Endothelial cell of umbilical vein (primary cell): ENCODE measurements at regions of chr2 and their contacts with region 1.

Region 1: DNA sequence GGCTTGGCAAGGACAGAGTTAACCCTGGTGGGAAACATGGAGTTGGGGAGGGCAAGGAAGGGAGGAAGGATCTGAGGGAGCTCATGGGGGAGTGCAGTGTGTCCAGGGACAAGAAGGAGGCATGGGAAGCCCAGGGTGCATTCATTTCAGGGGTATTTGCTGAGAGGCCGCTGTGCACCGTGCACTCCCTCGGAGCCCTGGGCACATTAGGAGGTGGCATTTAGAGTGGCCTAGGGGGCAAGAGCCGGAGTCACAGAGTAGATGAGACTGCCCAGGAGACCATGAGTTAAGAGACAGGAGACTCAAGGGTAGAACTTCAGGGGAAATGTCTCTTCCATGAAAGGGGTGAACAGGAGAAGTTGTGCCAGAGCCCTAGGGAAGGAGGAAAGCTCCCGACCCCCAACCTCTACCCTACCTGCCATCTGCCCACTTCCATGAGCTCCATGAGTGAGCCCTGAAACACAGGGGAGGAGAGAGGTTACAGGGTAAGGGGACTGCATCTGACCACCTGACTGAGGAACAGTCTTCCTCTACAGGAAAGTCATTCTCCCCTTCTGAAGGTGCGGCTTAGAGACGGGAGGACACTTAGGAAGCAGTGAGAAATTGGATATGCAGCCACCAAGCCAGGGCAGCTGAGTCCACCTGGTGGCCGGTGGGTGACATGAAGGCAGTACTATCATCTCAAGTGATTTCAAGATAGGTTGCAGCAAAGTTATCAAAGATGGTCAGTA is 58.5 kb upstream of the COPS8 start:
- DNase-seq: peak; percentile 86
- H3K4me3 ChIP-seq: no peak overlapping the region
- H3K27ac ChIP-seq: no peak overlapping the region
- H3K4me1 ChIP-seq: peaks cover 5% of the 10 kb centered on the region
- H3K27me3 ChIP-seq: no peaks in the 10 kb centered on the region
- CTCF ChIP-seq: peak; percentile 83 to 85
- POLR2A ChIP-seq: no peak

Region 2: DNA sequence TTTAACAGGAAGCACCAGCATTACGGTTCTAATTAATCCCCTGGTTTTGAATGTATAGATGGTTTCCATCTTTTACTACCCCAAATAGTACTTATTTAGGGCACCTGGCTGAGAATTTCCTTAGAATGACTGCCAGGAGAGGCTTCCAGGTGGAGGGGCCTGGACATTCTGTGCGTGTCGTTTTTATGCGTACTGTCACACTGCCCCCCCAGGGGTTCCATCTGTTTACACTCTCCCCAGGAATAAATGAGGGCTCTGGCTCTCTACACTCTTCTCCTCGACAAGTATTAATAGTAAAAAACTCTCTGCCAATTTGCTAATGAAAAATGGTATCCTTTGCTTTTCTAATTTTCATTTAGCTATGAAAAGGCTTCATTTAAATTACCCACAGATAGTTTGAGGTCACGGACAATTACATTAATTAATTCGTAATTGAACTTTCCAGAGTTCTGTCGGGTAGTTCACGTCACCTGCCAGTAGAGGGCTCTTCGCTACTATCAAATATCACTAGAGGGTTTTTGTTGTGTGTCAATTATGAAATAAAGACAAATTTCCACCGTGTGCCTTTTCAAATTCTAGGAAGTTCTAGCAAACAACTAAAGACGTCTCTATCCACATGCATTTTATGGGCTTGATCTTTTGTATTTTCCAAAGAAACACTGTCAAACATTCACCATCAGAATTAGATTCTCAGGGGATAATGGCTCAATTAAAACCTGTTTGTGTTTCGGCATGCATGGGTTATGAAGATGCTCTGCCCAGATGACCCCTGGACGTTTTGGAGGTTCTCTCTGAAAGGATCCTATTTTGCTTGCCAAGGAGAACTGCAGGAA is 674.2 kb before region 1 on chr2:
- CTCF ChIA-PET with region 1: interaction called, 3 read pairs
- POLR2A ChIA-PET with region 1: no interaction called
- dilution Hi-C with region 1: no loop called
- intact Hi-C with region 1: loop called (anchors 1 kb)
- DNase-seq: peak; percentile 44
- H3K4me3 ChIP-seq: no peak overlapping the region
- H3K27ac ChIP-seq: no peak overlapping the region
- H3K4me1 ChIP-seq: no peaks in the 10 kb centered on the region
- H3K27me3 ChIP-seq: no peaks in the 10 kb centered on the region
- CTCF ChIP-seq: peak; percentile 60 to 61
- POLR2A ChIP-seq: no peak

Region 3: GRCh38 chr2:236569573-236569973 is 457.6 kb before region 1 on chr2 and contains the start of gene ACKR3:
- CTCF ChIA-PET with region 1: interaction called, 17 read pairs
- POLR2A ChIA-PET with region 1: interaction called, 5 read pairs
- dilution Hi-C with region 1: no loop called
- intact Hi-C with region 1: loop called (anchors 1 kb)
- DNase-seq: peak; percentile 95
- H3K4me3 ChIP-seq: peak within 1 kb of the TSS; percentile 18 to 70 (median 58)
- H3K27ac ChIP-seq: peak within 1 kb of the TSS; percentile 46
- H3K4me1 ChIP-seq: peaks cover 52% of the 10 kb centered on the region
- H3K27me3 ChIP-seq: no peaks in the 10 kb centered on the region
- CTCF ChIP-seq: peak; percentile 55 to 69
- POLR2A ChIP-seq: peak; percentile 87
- total RNA-seq, gene ACKR3: 24.0 and 31.1 TPM in 2 replicates

Region 4: GRCh38 chr2:236745420-236746197 is 281.5 kb before region 1 on chr2:
- CTCF ChIA-PET with region 1: interaction called, 5 read pairs
- POLR2A ChIA-PET with region 1: no interaction called
- dilution Hi-C with region 1: no loop called
- intact Hi-C with region 1: loop called (anchors 2 kb)
- DNase-seq: no peak
- H3K4me3 ChIP-seq: no peak overlapping the region
- H3K27ac ChIP-seq: no peak overlapping the region
- H3K4me1 ChIP-seq: peaks cover 15% of the 10 kb centered on the region
- H3K27me3 ChIP-seq: no peaks in the 10 kb centered on the region
- CTCF ChIP-seq: no peak
- POLR2A ChIP-seq: no peak

Region 5: DNA sequence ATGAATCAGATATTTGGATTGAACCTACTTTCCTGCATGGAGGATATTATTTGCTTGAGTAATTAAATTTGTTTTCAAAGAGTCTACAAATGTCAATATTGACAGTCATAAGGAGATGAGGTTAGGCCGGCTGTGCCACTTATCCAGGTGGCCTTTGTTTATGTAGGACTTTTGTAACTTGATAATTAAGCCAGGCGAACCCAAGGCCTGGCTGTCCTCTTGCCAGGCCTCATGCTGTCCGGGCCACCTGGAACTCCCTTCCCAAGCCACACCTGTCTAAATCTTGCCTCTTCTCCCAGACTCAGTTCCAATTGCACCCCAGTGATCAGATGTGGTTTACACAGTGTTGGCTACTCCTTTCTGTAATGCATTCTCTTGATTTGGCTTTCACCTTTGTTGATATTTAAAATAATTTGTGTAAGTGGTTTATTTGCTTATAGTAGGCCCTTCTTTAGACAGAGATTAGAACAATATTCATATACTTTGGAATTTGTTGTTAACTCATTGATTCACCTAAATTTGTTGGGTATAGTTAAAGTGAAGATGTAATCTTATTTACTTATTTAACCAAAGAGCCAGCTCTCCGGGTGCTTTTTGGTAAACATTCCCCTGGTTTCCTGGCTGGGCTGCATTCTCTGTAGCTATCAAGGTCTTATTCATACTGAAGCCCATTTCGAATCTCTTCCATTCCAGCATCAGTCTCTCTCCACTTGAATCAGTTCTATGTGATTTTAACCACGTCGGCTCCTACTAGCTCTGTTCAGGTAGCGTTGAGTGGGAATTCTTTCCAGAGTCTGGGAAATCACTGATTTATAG is 202.1 kb before region 1 on chr2:
- CTCF ChIA-PET with region 1: no interaction called
- POLR2A ChIA-PET with region 1: no interaction called
- dilution Hi-C with region 1: no loop called
- intact Hi-C with region 1: loop called (anchors 2 kb)
- DNase-seq: peak; percentile 18
- H3K4me3 ChIP-seq: no peak overlapping the region
- H3K27ac ChIP-seq: no peak overlapping the region
- H3K4me1 ChIP-seq: peaks cover 37% of the 10 kb centered on the region
- H3K27me3 ChIP-seq: no peaks in the 10 kb centered on the region
- CTCF ChIP-seq: no peak
- POLR2A ChIP-seq: no peak

Region 6: DNA sequence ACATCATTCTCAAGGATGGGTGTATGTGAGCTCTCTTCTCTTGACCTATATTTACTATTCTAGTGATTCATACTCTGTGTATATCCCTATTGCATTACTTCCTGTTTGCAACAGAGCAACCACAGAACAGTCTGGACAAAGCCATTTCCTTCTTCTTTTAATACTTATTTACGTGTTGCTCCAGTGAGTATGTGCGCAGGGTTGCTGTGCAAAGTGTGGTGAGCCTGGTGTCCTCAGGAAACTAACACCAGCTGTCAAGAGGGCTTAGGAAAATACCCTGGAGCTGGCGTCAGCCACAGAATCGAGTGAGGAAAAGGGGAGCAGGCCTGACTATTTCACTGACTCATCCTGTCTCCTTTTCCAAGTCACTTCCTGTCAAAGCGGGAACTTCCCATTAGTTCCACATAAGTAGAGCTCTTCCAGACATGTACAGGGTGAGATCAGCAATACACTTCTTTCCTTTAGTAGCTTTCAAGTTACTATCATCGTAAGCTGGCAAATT is 155.6 kb before region 1 on chr2:
- CTCF ChIA-PET with region 1: interaction called, 5 read pairs
- POLR2A ChIA-PET with region 1: no interaction called
- dilution Hi-C with region 1: no loop called
- intact Hi-C with region 1: loop called (anchors 5 kb)
- DNase-seq: peak; percentile 96
- H3K4me3 ChIP-seq: no peak overlapping the region
- H3K27ac ChIP-seq: peak overlapping the region; percentile 92
- H3K4me1 ChIP-seq: peaks cover 35% of the 10 kb centered on the region
- H3K27me3 ChIP-seq: no peaks in the 10 kb centered on the region
- CTCF ChIP-seq: no peak
- POLR2A ChIP-seq: no peak

Region 7: DNA sequence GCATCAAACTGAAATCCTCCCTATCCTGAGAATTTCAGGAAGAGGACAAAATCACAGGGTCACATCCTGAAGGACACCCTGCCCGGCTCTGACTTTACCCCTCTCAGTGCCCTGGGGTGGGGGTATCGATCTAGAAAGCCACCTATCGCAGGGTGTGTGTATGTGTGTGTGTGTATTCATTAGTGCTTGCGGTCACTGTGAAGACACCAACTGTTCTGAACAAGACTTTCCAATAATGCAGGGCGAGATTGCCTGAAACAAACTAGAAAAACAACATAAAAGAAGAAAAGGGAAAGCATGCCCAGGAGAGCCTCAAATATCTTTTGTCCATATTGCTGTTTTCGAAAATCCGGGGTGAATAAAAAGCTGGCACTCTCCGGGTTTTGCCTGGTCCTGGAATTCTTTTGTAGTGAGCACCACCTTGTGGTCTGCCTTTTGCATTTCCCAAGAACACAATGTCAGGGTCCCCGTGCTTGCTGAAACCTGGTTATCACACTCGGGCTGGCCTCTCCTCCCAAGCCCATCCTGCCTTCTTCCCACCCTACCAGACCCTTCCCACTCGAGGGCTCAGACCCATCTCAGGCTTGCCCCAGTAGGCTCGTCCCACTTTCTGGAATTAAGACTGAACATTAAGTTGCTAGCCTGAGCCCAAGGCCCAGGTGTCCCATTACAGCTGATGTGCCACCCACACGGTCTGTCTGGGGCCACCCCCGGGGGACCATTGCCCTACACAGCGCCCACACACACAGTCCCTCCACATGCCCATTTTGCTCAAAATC is 33.6 kb after region 1 on chr2:
- CTCF ChIA-PET with region 1: interaction called, 7 read pairs
- POLR2A ChIA-PET with region 1: no interaction called
- dilution Hi-C with region 1: no loop called
- intact Hi-C with region 1: loop called (anchors 1 kb)
- DNase-seq: peak; percentile 77
- H3K4me3 ChIP-seq: peak overlapping the region in 1 of 3 experiments; percentile 11
- H3K27ac ChIP-seq: peak overlapping the region; percentile 9
- H3K4me1 ChIP-seq: peaks cover 7% of the 10 kb centered on the region
- H3K27me3 ChIP-seq: no peaks in the 10 kb centered on the region
- CTCF ChIP-seq: peak; percentile 65 to 67
- POLR2A ChIP-seq: no peak